ENCODE measurements at regions of chr6 and their contacts with region 1.

Region 1: DNA sequence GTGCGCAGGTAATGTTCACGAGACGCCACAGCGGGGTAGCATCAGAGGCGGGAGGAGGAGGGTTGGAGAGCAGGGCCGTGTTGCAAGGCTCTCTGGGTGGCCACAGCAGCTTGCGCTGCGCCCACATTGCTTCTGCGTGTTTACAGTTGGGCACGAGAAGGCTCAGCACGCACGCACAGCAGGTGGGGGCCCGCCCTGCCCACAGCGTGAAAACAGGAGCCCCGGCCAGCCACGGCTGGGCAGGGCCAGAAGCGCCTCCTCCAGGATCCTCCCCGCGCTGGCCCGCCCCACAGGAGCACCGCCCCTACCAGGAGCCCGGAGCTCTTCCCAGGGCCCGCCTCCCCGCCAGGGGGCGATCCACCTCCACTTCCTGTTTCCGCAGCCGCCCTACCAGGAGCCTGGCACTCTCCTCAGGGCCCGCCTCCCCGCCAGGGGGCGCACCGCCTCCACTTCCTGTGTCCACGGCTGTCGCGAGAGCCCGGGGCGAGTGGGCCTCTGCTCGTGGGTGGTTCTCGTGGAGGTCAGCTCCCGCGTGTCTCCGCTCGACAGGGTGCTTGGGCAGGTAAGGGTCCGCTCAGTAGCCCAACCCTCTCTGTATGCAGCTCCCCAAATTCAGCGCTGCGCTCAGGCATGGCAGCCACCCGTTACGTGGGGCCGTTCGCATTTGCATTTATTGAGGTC is at the start of gene FAM50B:
- H3K4me3 Mint-ChIP-seq: peak within 1 kb of the TSS; percentile 74
- H3K27ac Mint-ChIP-seq: peak within 1 kb of the TSS; percentile 72
- H3K4me1 Mint-ChIP-seq: peaks cover 19% of the 10 kb centered on the region
- H3K27me3 Mint-ChIP-seq: no peaks in the 10 kb centered on the region

Region 2: GRCh38 chr6:3751730-3752542 is 97.1 kb before region 1 on chr6:
- intact Hi-C with region 1: loop called (anchors 2 kb)
- H3K4me3 Mint-ChIP-seq: peak overlapping the region; percentile 82
- H3K27ac Mint-ChIP-seq: peak overlapping the region; percentile 88
- H3K4me1 Mint-ChIP-seq: peaks cover 46% of the 10 kb centered on the region
- H3K27me3 Mint-ChIP-seq: peaks cover 44% of the 10 kb centered on the region

Region 3: DNA sequence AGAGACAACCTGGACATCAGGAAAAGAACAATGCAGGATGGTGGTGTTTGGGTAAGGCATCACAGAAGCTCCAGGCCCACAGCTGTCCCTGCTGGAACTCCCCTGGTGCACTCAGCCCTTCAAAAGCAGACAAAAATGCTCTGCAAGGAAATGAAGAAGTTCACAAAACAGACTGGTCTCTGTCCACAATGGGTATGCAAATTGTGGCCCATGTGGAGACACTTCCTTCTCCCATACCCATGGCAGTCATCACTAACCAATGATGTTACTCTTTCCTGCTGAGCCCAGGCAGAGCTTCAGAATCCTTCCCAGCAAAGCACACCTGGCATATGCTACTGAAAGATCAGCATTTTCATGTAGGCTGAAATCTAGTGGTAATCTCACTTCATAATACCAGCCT is 55.0 kb before region 1 on chr6:
- intact Hi-C with region 1: loop called (anchors 5 kb)
- H3K4me3 Mint-ChIP-seq: no peak overlapping the region
- H3K27ac Mint-ChIP-seq: no peak overlapping the region
- H3K4me1 Mint-ChIP-seq: peaks cover 41% of the 10 kb centered on the region
- H3K27me3 Mint-ChIP-seq: no peaks in the 10 kb centered on the region

Region 4: DNA sequence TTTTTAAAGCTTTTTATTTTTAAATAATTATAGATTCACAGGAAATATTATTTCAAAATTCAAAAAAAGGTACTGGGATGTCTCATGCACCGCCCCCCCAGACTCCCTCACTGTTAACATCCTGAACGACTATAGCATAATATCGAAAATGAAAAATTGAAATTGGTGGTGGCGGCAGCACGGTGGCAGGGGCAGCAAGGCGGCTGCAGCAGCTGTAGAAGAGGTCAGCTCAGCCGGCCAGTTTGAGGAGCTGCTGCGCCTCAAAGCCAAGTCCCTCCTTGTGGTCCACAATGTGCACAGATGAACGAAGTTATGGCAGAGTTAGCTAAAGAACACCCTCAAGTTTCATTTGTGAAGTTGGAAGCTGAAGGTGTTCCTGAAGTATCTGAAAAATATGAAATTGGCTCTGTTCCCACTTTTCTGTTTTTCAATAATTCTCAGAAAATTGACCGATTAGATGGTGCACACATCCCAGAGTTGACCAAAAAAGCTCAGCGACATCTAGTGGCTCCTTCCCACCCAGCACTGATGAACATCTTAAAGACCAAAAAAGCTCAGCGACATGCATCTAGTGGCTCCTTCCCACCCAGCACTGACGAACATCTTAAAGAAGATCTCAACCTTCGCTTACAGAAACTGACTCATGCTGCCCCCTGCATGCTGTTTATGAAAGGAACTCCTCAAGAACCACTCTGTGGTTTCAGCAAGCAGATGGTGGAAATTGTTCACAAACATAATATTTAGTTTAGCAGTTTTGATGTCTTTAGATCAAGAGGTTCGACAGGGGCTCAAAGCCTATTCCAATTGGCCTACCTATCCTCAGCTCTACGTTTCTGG is 129.0 kb after region 1 on chr6:
- intact Hi-C with region 1: loop called (anchors 10 kb)
- H3K4me3 Mint-ChIP-seq: no peak overlapping the region
- H3K27ac Mint-ChIP-seq: no peak overlapping the region
- H3K4me1 Mint-ChIP-seq: no peaks in the 10 kb centered on the region
- H3K27me3 Mint-ChIP-seq: peaks cover 6% of the 10 kb centered on the region